ENCODE measurements at regions of chr6 and their contacts with region 1.

Region 1: DNA sequence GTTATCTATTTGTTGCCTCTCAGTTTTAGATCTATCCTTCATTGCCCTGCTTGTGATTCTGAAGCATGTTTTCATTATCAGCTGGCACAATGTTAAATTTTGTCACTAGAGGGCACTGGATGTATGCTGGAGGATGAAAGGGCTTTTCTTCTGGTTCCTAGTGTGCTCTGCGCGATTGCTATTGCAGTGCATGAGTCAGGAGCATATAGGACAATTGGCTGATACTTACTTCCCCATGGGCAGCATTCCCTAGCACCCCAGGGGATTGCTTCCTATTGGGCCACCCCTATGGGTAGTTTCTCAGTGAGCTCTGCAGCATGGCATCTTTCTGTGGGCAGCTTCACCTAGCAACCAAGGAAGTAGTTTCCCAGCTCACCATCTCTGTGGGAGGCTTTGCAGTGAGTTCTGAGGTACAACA is 280.3 kb upstream of the SYNCRIP start:
- DNase-seq: peak; percentile 35 to 37
- H3K4me3 ChIP-seq: no peak overlapping the region
- H3K27ac ChIP-seq: peak overlapping the region in 2 of 3 donors; percentile 53 to 57
- H3K4me1 ChIP-seq: peaks cover 15 to 20% of the 10 kb centered on the region in 2 donors
- H3K27me3 ChIP-seq: no peaks in the 10 kb centered on the region
- CTCF ChIP-seq: peak; percentile 27 to 92 (median 72)
- POLR2A ChIP-seq: no peak

Region 2: DNA sequence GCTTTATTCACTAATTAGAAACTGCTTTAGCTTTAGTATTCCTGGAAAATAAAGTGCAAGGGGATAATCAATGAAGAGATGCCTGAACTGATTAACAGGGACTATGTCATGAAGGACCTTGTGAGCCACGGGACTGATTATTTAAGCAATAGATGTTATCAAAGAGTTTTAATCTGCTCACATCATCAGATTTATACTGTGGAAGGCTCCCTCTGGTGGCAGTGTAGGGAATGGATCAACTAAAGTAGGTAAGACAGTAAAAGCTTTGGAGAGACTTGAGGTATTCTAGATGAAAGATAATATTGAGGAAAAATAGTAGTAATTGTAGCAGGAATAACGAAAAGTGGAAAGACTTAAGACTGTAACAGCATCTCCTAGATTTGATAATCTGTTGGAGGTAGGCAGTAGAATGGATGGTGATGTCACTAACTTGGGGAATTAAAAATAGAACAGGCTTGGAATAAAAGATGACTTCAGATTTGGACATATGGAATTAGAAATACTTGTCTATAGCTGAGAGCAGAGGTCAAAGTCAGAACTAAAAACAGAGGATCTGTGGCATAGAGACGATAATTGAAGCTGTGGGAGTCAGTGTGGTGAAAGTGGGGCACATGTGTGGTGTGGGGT is 934.0 kb after region 1 on chr6:
- intact Hi-C with region 1: loop called (anchors 10 kb)
- DNase-seq: peak; percentile 62
- H3K4me3 ChIP-seq: no peak overlapping the region
- H3K27ac ChIP-seq: peak overlapping the region in 1 of 3 donors; percentile 56
- H3K4me1 ChIP-seq: peaks cover 0 to 9% of the 10 kb centered on the region in 2 donors
- H3K27me3 ChIP-seq: no peaks in the 10 kb centered on the region
- CTCF ChIP-seq: peak; percentile 50 to 87 (median 61)
- POLR2A ChIP-seq: no peak